GM18951 (cell line): ENCODE measurements at regions of chr3 and their contacts with region 1.

Region 1: GRCh38 chr3:157081681-157082210 is 78.2 kb downstream of the CCNL1 start:
- POLR2A ChIP-seq: no peak

Region 2: GRCh38 chr3:156535162-156535627 is 546.6 kb before region 1 on chr3:
- in situ Hi-C with region 1: loop called (anchors 25 kb)
- POLR2A ChIP-seq: no peak

Region 3: GRCh38 chr3:156681002-156681401 is 400.7 kb before region 1 on chr3:
- in situ Hi-C with region 1: loop called (anchors 5 kb)
- POLR2A ChIP-seq: no peak

Region 4: GRCh38 chr3:156826144-156826895 is 255.4 kb before region 1 on chr3 and contains the start of gene LEKR1:
- in situ Hi-C with region 1: loop called (anchors 10 kb)
- POLR2A ChIP-seq: peak; percentile 79

Region 5: GRCh38 chr3:156873906-156874305 is 207.8 kb before region 1 on chr3:
- in situ Hi-C with region 1: no loop called
- POLR2A ChIP-seq: no peak

Region 6: GRCh38 chr3:157493627-157494550 is 412.1 kb after region 1 on chr3:
- in situ Hi-C with region 1: no loop called
- POLR2A ChIP-seq: no peak